Aorta (tissue), 5 donors: ENCODE measurements at regions of chr20 and their contacts with region 1.

Region 1: DNA sequence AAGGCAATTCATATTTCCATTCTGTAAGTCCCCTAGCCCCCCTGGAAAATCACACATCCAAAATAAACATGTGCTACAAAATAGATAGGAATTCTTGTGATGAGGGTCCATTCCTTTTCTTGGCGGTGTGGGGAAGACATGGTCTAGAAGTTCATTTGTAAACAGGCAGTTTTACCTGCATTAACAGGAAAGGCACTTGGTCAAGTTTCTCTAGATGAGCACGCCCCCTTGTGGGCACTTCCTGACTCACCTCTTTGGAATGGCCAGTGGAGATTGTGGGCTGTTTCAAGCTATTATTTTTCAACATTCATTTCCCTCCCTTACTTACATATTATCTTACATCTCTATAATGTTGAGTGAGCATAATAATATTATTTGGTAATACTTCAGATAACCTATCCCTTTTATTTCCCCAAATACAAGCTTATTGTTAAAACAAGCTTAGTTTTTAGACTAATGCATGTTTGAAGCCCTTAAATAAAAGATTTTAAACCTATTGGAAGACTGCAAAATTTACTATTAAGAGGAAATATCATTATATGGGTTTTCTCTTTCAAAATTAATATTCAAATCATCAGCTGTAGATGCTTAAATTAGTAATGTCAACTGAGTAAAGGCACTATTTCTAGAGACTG is 92.1 kb downstream of the TASP1 start:
- DNase-seq: peak; percentile 70 to 92
- ATAC-seq: peak; percentile 71
- H3K4me3 ChIP-seq: no peak overlapping the region
- H3K27ac ChIP-seq: no peak overlapping the region
- H3K4me1 ChIP-seq: no peaks in the 10 kb centered on the region
- H3K27me3 ChIP-seq: no peaks in the 10 kb centered on the region

Region 2: DNA sequence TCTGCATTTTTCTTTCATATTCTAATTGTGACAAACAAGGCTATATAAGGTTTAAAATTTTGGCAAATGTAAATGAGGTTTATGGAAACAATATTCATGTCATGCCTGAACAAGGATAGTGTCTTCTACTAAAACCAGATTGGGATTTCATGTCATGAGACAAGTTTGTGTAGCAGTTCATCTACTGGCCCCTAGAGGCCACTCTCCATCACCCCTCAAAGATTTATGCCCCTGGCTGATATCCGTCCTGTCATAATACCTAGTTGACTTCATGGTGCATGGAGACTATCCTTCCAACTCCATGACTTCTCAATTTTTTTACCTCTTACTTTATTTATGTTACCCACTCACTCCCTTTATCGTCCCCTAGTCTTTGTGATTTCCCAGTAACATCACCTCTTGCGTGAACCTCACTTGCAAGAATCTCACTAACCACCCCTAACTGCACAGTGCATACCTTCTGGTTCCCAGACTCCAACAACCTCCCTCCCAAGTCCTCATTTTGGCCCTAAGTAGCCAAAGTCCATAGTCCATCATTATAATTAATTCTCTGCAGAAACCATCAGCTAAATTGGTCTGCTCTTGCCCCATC is 87.7 kb before region 1 on chr20:
- intact Hi-C with region 1: loop called in 1 of 2 experiments (anchors 10 kb)
- DNase-seq: no peak
- ATAC-seq: no peak
- H3K4me3 ChIP-seq: no peak overlapping the region
- H3K27ac ChIP-seq: no peak overlapping the region
- H3K4me1 ChIP-seq: no peaks in the 10 kb centered on the region
- H3K27me3 ChIP-seq: no peaks in the 10 kb centered on the region

Region 3: GRCh38 chr20:13648291-13649228 is 101.9 kb after region 1 on chr20:
- intact Hi-C with region 1: no loop called
- DNase-seq: no peak
- ATAC-seq: peak; percentile 76
- H3K4me3 ChIP-seq: no peak overlapping the region
- H3K27ac ChIP-seq: no peak overlapping the region
- H3K4me1 ChIP-seq: no peaks in the 10 kb centered on the region
- H3K27me3 ChIP-seq: no peaks in the 10 kb centered on the region

Region 4: GRCh38 chr20:13755809-13756208 is 209.2 kb after region 1 on chr20:
- intact Hi-C with region 1: loop called (anchors 10 kb)
- DNase-seq: no peak
- ATAC-seq: no peak
- H3K4me3 ChIP-seq: no peak overlapping the region
- H3K27ac ChIP-seq: no peak overlapping the region
- H3K4me1 ChIP-seq: peaks cover 0 to 2% of the 10 kb centered on the region in 2 donors
- H3K27me3 ChIP-seq: no peaks in the 10 kb centered on the region